Naive thymus-derived CD4-positive, alpha-beta T cell (primary cell): ENCODE measurements at regions of chr6 and their contacts with region 1.

Region 1: DNA sequence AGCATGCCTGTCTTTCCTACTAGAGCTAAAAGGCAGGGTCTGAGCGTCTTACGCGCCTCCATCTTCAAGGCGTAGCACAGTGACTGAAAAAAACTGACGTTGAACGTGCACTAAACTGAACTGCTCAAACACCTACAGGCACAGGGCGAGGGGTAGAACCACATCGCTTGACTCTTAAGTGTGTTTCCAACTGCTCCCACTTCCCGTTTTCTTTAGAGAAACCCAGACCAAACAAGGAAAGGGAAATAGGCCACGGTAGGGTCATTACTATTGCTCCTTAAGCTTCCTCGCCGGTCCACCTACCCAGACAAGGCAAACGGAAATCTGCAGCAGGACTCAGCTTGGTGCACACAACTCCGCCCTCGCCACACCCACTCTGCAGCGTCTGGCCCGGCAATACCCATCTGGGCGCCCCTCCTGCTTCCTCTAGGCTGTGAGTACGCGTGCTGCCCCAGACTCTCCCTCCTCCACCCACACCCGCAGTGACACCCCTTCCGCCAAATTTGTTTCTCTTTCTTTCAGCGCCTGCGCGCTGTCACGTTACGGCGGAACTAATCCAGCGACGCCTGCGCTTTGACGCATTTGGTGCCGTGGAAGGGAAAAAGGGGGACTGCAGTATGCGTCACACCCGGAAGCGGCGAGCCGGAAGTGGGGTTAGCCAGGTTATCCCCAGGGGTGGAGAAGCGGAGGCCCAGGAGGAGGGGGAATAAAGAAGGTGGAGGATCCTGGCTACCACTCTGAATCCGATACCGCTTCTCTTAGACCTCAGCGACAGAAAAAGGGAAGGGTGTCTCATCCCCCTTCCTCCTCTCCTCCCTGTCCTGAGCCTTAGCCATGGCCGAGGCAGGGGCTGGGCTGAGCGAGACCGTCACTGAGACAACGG is at the start of gene PPP1R11:
- DNase-seq: peak; percentile 84 to 100 (median 99)
- ATAC-seq: peak; percentile 99
- H3K4me3 ChIP-seq: peak within 1 kb of the TSS; percentile 94
- H3K4me3 Mint-ChIP-seq: peak within 1 kb of the TSS; percentile 87 to 100 (median 98)
- H3K27ac ChIP-seq: peak within 1 kb of the TSS; percentile 96
- H3K27ac Mint-ChIP-seq: peak within 1 kb of the TSS; percentile 96 to 100 (median 99)
- H3K4me1 ChIP-seq: peaks cover 28 to 41% of the 10 kb centered on the region in 2 donors
- H3K4me1 Mint-ChIP-seq: peaks cover 43 to 77% (median 71%) of the 10 kb centered on the region in 7 donors
- H3K27me3 ChIP-seq: no peaks in the 10 kb centered on the region
- H3K27me3 Mint-ChIP-seq: peaks cover 10 to 22% (median 16%) of the 10 kb centered on the region in 5 donors
- total RNA-seq, gene PPP1R11: 49.4 to 67.1 (median 62.7) TPM

Region 2: GRCh38 chr6:29723262-29723665 is 343.6 kb before region 1 on chr6 and contains the start of gene HLA-F:
- CTCF ChIA-PET with region 1: no interaction called
- POLR2A ChIA-PET with region 1: no interaction called
- intact Hi-C with region 1: loop called (anchors 5 kb)
- DNase-seq: peak; percentile 56 to 87 (median 79)
- ATAC-seq: peak; percentile 91
- H3K4me3 ChIP-seq: peak within 1 kb of the TSS; percentile 98
- H3K4me3 Mint-ChIP-seq: peak within 1 kb of the TSS; percentile 82 to 97 (median 95)
- H3K27ac ChIP-seq: peak within 1 kb of the TSS; percentile 100
- H3K27ac Mint-ChIP-seq: peak within 1 kb of the TSS; percentile 92 to 98 (median 95)
- H3K4me1 ChIP-seq: peaks cover 47 to 48% of the 10 kb centered on the region in 2 donors
- H3K4me1 Mint-ChIP-seq: peaks cover 32 to 63% (median 50%) of the 10 kb centered on the region in 7 donors
- H3K27me3 ChIP-seq: no peaks in the 10 kb centered on the region
- H3K27me3 Mint-ChIP-seq: no peaks in the 10 kb centered on the region
- total RNA-seq, gene HLA-F: 502 to 678 (median 522) TPM

Region 3: DNA sequence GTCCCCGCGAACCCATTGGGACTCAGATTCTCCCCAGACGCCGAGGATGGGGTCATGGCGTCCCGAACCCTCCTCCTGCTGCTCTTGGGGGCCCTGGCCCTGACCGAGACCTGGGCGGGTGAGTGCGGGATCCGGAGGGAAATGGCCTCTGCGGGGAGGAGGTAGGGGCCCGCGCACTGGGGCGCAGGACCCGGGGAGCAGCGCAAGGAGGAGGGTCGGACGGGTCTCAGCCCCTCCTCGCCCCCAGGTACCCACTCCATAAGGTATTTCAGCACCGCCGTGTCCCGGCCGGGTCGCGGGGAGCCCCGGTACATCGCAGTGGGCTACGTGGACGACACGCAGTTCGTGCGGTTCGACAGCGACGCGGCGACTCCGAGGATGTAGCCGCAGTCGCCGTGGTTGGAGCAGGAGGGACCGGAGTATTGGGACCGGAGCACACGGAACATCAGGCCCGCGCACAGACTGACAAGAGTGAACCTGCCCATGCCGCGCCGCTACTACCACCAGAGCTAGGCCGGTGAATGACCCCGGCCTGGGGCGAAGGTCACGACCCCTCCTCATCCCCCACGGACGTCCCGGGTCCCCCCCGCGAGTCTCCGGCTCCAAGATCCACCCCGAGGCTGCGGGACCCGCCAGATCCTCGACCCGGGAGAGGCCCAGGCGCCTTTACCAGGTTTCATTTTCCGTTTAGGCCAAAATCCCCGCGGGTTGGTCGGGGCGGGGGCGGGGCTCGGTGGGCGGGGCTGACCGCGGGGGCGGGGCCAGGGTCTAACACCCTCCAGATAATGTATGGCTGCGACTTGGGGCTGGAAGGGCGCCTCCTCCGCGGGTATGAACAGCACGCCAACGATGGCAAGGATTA is 140.2 kb before region 1 on chr6:
- CTCF ChIA-PET with region 1: no interaction called
- POLR2A ChIA-PET with region 1: no interaction called
- intact Hi-C with region 1: loop called (anchors 2 kb)
- DNase-seq: peak in 8 of 9 donors; percentile 40 to 90 (median 78)
- ATAC-seq: peak; percentile 96
- H3K4me3 ChIP-seq: peak overlapping the region; percentile 68
- H3K4me3 Mint-ChIP-seq: peak overlapping the region in 9 of 10 donors; percentile 83 to 97 (median 94)
- H3K27ac ChIP-seq: peak overlapping the region; percentile 95
- H3K27ac Mint-ChIP-seq: peak overlapping the region in 8 of 9 donors; percentile 90 to 99 (median 97)
- H3K4me1 ChIP-seq: peaks cover 4 to 15% of the 10 kb centered on the region in 2 donors
- H3K4me1 Mint-ChIP-seq: peaks cover 1 to 51% (median 15%) of the 10 kb centered on the region in 7 donors
- H3K27me3 ChIP-seq: no peaks in the 10 kb centered on the region
- H3K27me3 Mint-ChIP-seq: peaks cover 0 to 3% (median 0%) of the 10 kb centered on the region in 5 donors

Region 4: DNA sequence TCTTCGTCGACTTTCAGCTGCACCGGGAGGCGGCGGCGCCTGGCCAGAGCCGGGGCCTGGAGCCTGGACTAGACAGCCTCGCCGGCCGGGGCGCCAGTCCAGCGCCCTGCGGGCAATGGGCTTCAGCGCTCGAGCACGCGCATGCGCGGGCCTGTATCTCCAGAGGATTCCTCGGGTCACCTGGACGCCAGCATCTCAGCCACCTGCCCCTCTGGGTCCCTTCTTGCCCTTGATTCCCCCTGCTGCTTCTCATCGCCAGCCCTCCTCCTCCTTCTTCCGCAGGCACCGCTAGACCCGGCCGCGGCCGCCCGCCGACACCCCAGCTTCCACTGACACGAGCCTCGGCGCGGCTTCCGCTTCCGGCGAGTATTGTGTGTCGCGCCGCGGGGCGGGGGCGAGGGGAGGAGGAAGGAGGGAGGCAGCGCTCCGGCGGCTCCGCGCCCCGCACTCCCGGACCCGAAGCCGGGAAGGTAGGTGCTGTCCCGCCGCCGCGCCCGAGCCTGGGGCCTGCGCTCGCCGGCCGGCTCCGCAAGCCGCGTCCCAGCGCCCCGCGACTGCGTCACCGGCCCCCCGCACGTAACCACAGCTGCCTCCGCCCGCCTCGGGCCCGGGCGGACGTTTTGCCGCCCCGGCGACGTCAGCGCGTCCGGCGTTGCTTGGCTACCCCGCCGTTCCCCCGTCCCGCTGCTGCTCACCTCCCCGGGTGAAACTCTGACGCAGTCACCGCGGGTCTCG is 259.9 kb after region 1 on chr6 and contains the start of gene TRIM39:
- CTCF ChIA-PET with region 1: no interaction called
- POLR2A ChIA-PET with region 1: interaction called, 10 read pairs
- intact Hi-C with region 1: loop called in 1 of 2 experiments (anchors 5 kb)
- DNase-seq: peak; percentile 88 to 94 (median 92)
- ATAC-seq: peak; percentile 76
- H3K4me3 ChIP-seq: peak within 1 kb of the TSS; percentile 70
- H3K4me3 Mint-ChIP-seq: peak within 1 kb of the TSS; percentile 93 to 99 (median 97)
- H3K27ac ChIP-seq: peak within 1 kb of the TSS; percentile 100
- H3K27ac Mint-ChIP-seq: peak within 1 kb of the TSS; percentile 92 to 100 (median 99)
- H3K4me1 ChIP-seq: peaks cover 34 to 48% of the 10 kb centered on the region in 2 donors
- H3K4me1 Mint-ChIP-seq: peaks cover 42 to 70% (median 63%) of the 10 kb centered on the region in 7 donors
- H3K27me3 ChIP-seq: no peaks in the 10 kb centered on the region
- H3K27me3 Mint-ChIP-seq: no peaks in the 10 kb centered on the region
- total RNA-seq, gene TRIM39: 12.8 to 42.1 (median 26.4) TPM

Region 5: GRCh38 chr6:30571075-30571768 is 504.4 kb after region 1 on chr6 and contains the start of gene ABCF1:
- CTCF ChIA-PET with region 1: no interaction called
- POLR2A ChIA-PET with region 1: no interaction called
- intact Hi-C with region 1: loop called in 1 of 2 experiments (anchors 1 kb)
- DNase-seq: peak; percentile 98 to 100 (median 99)
- ATAC-seq: peak; percentile 99
- H3K4me3 ChIP-seq: peak within 1 kb of the TSS; percentile 94
- H3K4me3 Mint-ChIP-seq: peak within 1 kb of the TSS; percentile 94 to 100 (median 98)
- H3K27ac ChIP-seq: peak within 1 kb of the TSS; percentile 98
- H3K27ac Mint-ChIP-seq: peak within 1 kb of the TSS; percentile 96 to 100 (median 99)
- H3K4me1 ChIP-seq: peaks cover 33 to 38% of the 10 kb centered on the region in 2 donors
- H3K4me1 Mint-ChIP-seq: peaks cover 55 to 79% (median 64%) of the 10 kb centered on the region in 7 donors
- H3K27me3 ChIP-seq: no peaks in the 10 kb centered on the region
- H3K27me3 Mint-ChIP-seq: peaks cover 0 to 4% (median 0%) of the 10 kb centered on the region in 5 donors
- total RNA-seq, gene ABCF1: 65.1 to 116 (median 86.6) TPM